ENCODE measurements at regions of chr5 and their contacts with region 1.

Region 1: GRCh38 chr5:131796793-131797693 is at the start of gene FNIP1:
- DNase-seq: peak; percentile 86
- ATAC-seq: peak; percentile 93
- H3K4me3 ChIP-seq: peak within 1 kb of the TSS; percentile 86
- H3K27ac ChIP-seq: peak within 1 kb of the TSS; percentile 93
- H3K4me1 ChIP-seq: peaks cover 6% of the 10 kb centered on the region
- H3K27me3 ChIP-seq: no peaks in the 10 kb centered on the region
- CTCF ChIP-seq: no peak
- EP300 ChIP-seq: 0 out of 4 replicates have a peak, but pooled peaks of 1 of the 2 experiments have one; percentile 29
- POLR2A ChIP-seq: peak; percentile 97
- RAD21 ChIP-seq: no peak
- polyA plus RNA-seq, gene FNIP1: 4.3 to 7.0 TPM

Region 2: GRCh38 chr5:131810510-131811249 is 13.6 kb after region 1 on chr5:
- CTCF ChIA-PET with region 1: interaction called, 5 read pairs
- POLR2A ChIA-PET with region 1: interaction called, 4 read pairs
- RAD21 ChIA-PET with region 1: interaction called, 4 read pairs
- SMC1A ChIA-PET with region 1: interaction called, 18 read pairs
- in situ Hi-C with region 1: no loop called
- intact Hi-C with region 1: no loop called
- DNase-seq: no peak
- ATAC-seq: peak; percentile 75
- H3K4me3 ChIP-seq: no peak overlapping the region
- H3K27ac ChIP-seq: no peak overlapping the region
- H3K4me1 ChIP-seq: peaks cover 5% of the 10 kb centered on the region; the same call in 1 of the 2 replicates
- H3K27me3 ChIP-seq: no peaks in the 10 kb centered on the region
- CTCF ChIP-seq: peak; percentile 18 to 52 (median 42); a peak in 4 of 6 replicates
- EP300 ChIP-seq: no peak
- POLR2A ChIP-seq: no peak
- RAD21 ChIP-seq: peak; percentile 77

Region 3: DNA sequence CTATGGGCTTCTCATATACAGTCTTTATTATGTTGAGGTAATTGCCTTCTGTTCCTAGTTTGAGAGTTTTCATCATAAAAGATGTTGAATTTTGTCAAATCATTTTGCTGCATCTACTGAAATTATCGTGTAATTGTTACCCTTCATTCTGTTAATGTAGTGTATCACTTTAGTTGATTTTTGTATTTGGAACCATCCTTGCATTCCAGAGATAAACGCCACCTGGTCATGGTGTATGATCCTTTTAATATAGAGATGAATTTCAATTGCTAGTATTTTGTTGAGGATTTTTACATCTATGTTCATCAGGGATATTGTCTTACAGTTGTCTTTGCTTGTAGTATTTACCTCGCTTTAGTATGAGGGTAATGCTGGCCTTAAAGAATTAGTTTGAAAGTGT is 129.1 kb after region 1 on chr5:
- CTCF ChIA-PET with region 1: no interaction called
- POLR2A ChIA-PET with region 1: no interaction called
- RAD21 ChIA-PET with region 1: no interaction called
- SMC1A ChIA-PET with region 1: no interaction called
- in situ Hi-C with region 1: no loop called
- intact Hi-C with region 1: no loop called
- DNase-seq: no peak
- ATAC-seq: no peak
- H3K4me3 ChIP-seq: no peak overlapping the region
- H3K27ac ChIP-seq: no peak overlapping the region
- H3K4me1 ChIP-seq: no peaks in the 10 kb centered on the region
- H3K27me3 ChIP-seq: no peaks in the 10 kb centered on the region
- CTCF ChIP-seq: no peak
- EP300 ChIP-seq: no peak
- POLR2A ChIP-seq: no peak
- RAD21 ChIP-seq: no peak